ENCODE measurements at regions of chr13 and their contacts with region 1.

Region 1: GRCh38 chr13:113816946-113817859 is 46.7 kb downstream of the GAS6 start:
- DNase-seq: peak; percentile 92
- ATAC-seq: peak; percentile 52

Region 2: DNA sequence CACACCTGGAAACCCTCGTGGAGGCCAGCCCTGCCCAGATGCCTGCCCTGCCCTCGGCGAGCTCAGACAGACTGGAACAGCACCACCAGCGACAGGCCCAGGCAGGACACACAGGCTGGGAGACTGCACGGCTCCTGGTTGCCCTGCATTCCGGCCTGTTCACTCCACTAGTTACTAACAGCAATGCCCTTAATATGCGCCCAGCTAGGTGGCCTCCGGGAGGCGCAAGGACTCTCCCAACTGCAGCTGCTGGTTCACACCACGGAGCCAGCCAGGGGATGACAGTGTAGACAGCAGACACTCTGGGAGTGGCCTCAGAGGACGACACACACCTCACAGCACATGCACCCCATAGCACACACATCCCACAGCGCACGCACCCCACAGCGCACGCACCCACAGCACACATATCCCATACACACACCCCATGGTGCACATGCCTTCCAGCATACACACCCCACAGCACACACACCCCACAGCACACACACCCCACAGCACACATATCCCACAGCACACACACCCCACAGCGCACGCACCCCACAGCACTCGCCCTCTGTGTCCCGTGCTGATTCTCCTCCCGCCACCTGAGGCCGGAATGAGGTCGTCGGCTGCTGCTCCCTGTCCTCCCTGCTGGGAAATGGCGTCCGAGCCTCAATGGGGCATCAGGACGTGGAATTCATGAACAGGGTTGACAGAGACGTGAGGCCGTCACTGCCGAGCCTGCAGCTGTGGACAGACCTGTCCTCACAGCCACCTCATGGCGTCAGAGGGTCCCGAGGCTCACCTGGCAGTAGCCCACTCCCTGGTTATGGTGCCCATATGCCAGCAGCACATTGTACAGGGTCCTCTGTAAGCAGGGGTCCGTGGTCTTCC is 466.9 kb before region 1 on chr13:
- intact Hi-C with region 1: no loop called
- DNase-seq: no peak
- ATAC-seq: no peak

Region 3: GRCh38 chr13:113887700-113888201 is 70.5 kb after region 1 on chr13:
- intact Hi-C with region 1: loop called (anchors 5 kb)
- DNase-seq: no peak
- ATAC-seq: no peak

Region 4: DNA sequence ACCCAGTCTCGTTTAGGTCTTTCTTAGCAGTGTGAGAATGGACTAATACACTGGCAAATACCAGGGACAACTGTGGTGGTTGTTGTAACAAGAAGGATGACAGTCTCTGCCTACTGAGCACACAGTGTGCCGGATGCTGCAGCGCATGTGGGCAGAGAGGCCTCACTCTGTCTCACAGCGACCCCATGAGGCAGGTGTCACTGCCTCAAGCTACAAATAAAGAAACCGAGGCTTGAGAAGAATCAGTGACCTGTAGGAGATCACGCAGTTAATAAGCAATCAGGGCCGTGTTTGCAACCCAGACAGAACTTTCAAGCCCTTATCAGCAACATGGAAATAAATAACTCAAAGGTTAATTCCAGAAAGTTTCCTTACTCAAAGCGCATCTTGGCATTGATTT is 87.2 kb after region 1 on chr13:
- intact Hi-C with region 1: loop called (anchors 5 kb)
- DNase-seq: peak; percentile 75
- ATAC-seq: peak; percentile 95

Region 5: GRCh38 chr13:113951246-113951999 is 134.2 kb after region 1 on chr13:
- intact Hi-C with region 1: loop called (anchors 5 kb)
- DNase-seq: peak; percentile 92
- ATAC-seq: peak; percentile 97

Measured in Right ventricle myocardium superior (tissue), 1 donor.